ENCODE measurements at regions of chr12 and their contacts with region 1.

Region 1: DNA sequence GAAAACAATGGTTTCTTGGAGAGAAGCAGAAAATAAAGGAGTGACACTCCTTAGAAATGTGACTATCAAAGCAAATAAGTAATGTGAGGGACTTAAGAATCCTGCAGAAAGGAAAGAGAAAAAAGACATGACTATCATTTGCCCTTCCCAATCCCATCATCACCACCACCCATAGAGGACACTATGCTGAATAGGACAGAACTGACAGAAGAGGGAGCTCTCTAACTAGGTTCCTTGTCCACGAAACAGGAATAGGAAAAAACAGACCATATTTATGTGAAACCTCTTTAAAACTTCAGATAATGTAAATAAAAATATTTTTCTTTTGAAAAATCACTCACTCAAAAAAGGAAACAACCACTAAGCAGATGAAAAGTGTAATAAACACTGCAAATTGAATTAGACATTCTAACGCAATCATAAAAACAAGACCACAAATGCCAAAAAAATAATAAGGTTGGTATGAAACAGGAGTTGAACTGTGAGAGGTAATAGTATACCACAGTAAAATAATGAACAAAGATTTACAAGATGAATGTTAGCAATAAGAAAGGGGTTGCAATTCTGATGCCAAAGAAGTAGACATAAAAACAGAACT is 24.1 kb downstream of the KLRD1 start:
- DNase-seq: peak; percentile 26 to 63 (median 50)
- H3K4me3 ChIP-seq: no peak overlapping the region
- H3K4me3 Mint-ChIP-seq: no peak overlapping the region
- H3K27ac ChIP-seq: no peak overlapping the region
- H3K27ac Mint-ChIP-seq: no peak overlapping the region
- H3K4me1 ChIP-seq: no peaks in the 10 kb centered on the region
- H3K4me1 Mint-ChIP-seq: peaks cover 10% of the 10 kb centered on the region
- H3K27me3 ChIP-seq: peaks cover 0 to 2% of the 10 kb centered on the region in 2 donors
- H3K27me3 Mint-ChIP-seq: peaks cover 0 to 2% (median 0%) of the 10 kb centered on the region in 3 donors
- CTCF ChIP-seq: peak; percentile 73

Region 2: GRCh38 chr12:10252201-10252600 is 79.5 kb before region 1 on chr12:
- intact Hi-C with region 1: no loop called
- DNase-seq: no peak
- H3K4me3 ChIP-seq: no peak overlapping the region
- H3K4me3 Mint-ChIP-seq: no peak overlapping the region
- H3K27ac ChIP-seq: no peak overlapping the region
- H3K27ac Mint-ChIP-seq: no peak overlapping the region
- H3K4me1 ChIP-seq: no peaks in the 10 kb centered on the region
- H3K4me1 Mint-ChIP-seq: peaks cover 6% of the 10 kb centered on the region
- H3K27me3 ChIP-seq: peaks cover 9% of the 10 kb centered on the region in 2 donors
- H3K27me3 Mint-ChIP-seq: peaks cover 10 to 32% (median 20%) of the 10 kb centered on the region in 3 donors
- CTCF ChIP-seq: no peak

Region 3: GRCh38 chr12:10562306-10562933 is 230.7 kb after region 1 on chr12:
- intact Hi-C with region 1: loop called (anchors 2 to 5 kb)
- DNase-seq: peak; percentile 12 to 44 (median 41)
- H3K4me3 ChIP-seq: no peak overlapping the region
- H3K4me3 Mint-ChIP-seq: no peak overlapping the region
- H3K27ac ChIP-seq: no peak overlapping the region
- H3K27ac Mint-ChIP-seq: no peak overlapping the region
- H3K4me1 ChIP-seq: no peaks in the 10 kb centered on the region
- H3K4me1 Mint-ChIP-seq: peaks cover 2% of the 10 kb centered on the region
- H3K27me3 ChIP-seq: no peaks in the 10 kb centered on the region
- H3K27me3 Mint-ChIP-seq: peaks cover 0 to 3% (median 1%) of the 10 kb centered on the region in 3 donors
- CTCF ChIP-seq: peak; percentile 86

Region 4: DNA sequence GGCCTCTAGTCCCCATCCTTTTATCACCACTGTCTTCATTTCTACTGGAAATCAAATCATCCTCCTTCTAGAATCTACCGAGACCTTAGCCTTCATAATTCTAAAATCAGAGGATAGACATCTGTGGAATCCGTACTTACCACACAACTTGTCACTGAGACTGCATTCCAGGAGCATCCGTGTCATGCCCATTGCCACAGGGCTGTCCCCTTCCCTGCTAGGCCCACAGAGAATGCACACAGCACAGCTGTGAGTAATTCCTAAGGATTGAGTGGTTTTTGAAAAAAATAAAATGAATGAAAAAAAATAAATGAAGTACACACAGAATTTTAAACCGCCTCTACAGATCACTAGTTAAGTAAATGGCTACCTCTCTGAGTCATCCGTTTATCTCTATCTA is 302.7 kb after region 1 on chr12:
- intact Hi-C with region 1: no loop called
- DNase-seq: no peak
- H3K4me3 ChIP-seq: no peak overlapping the region
- H3K4me3 Mint-ChIP-seq: no peak overlapping the region
- H3K27ac ChIP-seq: no peak overlapping the region
- H3K27ac Mint-ChIP-seq: peak overlapping the region in 1 of 7 donors; percentile 10
- H3K4me1 ChIP-seq: no peaks in the 10 kb centered on the region
- H3K4me1 Mint-ChIP-seq: no peaks in the 10 kb centered on the region
- H3K27me3 ChIP-seq: no peaks in the 10 kb centered on the region
- H3K27me3 Mint-ChIP-seq: peaks cover 0 to 3% (median 2%) of the 10 kb centered on the region in 3 donors
- CTCF ChIP-seq: no peak

Measured in CD14-positive monocyte (primary cell).